ENCODE measurements at regions of chr1 and their contacts with region 1.

Region 1: DNA sequence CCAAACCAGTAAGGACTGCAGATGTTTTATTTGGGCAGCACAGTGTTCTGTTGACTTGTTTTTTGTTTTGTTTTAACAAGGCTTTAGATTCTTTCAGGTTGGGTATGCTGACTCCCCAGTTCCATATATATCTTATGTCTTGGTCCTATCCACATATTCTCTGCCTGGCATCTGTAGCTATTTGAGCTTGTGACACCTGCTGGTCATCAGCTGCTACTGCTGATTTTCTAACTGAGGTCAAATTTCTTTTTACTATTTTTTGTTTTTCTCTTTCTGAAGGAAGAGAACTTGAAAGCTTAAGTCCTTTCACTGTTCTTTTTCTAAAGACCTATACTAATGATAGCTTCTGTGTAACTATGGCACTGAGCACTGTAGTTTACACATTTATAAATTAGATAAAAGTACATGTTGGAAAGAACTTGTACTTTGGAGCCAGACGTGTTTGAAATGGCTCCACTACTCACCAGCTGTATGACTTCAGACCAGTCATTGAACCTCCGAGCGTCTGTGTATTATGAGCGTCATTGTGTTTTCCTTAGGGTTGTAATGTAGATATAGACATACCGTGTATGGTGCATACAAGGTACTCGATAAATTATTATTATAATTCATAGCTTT is 109.4 kb downstream of the NRDC start:
- DNase-seq: no peak
- H3K4me3 Mint-ChIP-seq: no peak overlapping the region
- H3K27ac Mint-ChIP-seq: no peak overlapping the region
- H3K4me1 Mint-ChIP-seq: peaks cover 6% of the 10 kb centered on the region
- H3K27me3 Mint-ChIP-seq: no peaks in the 10 kb centered on the region

Region 2: DNA sequence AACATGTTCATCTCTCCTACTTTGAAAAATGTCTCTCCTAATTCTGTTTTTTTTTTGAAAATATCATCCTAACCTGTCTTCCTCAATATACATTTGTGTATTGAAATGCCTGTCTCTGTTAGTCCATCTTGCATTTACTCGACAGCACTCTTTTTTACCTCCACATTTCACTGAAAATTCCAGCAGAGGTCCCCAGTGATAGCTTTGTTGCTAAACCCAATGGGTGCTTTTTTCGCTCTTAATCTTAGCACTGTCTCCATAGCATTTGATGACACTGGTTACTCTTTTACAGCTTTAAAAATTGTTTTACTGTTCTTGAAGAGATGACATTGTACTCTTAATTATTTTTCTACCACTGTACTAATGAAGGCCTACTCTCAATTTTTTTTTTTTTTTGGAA is 141.4 kb before region 1 on chr1:
- intact Hi-C with region 1: loop called (anchors 5 kb)
- DNase-seq: no peak
- H3K4me3 Mint-ChIP-seq: no peak overlapping the region
- H3K27ac Mint-ChIP-seq: no peak overlapping the region
- H3K4me1 Mint-ChIP-seq: peaks cover 7% of the 10 kb centered on the region
- H3K27me3 Mint-ChIP-seq: no peaks in the 10 kb centered on the region

Region 3: DNA sequence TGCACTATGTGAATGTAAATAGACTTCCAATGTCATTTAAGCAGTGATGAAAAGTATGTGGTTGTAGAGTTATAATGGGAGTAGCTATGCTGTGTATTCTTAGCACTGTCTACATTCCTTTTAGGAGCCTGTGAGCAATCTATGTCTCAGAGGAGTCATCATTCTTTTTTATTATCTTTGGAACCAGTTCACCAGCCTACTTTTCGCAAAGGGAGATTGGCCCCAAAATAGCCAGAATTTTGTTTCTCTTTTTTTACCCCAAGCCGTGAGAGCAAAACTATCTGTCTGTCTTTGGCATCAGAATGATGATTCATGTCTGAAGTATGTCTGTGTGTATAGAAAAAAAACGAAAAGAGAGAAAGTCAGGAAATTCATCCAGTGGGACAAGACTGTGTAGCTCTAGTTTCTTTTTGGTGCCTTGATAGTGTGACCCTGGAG is 108.0 kb before region 1 on chr1:
- intact Hi-C with region 1: no loop called
- DNase-seq: no peak
- H3K4me3 Mint-ChIP-seq: no peak overlapping the region
- H3K27ac Mint-ChIP-seq: no peak overlapping the region
- H3K4me1 Mint-ChIP-seq: no peaks in the 10 kb centered on the region
- H3K27me3 Mint-ChIP-seq: peaks cover 7% of the 10 kb centered on the region

Region 4: GRCh38 chr1:52268372-52268771 is 499.3 kb after region 1 on chr1:
- intact Hi-C with region 1: no loop called
- DNase-seq: no peak
- H3K4me3 Mint-ChIP-seq: no peak overlapping the region
- H3K27ac Mint-ChIP-seq: no peak overlapping the region
- H3K4me1 Mint-ChIP-seq: no peaks in the 10 kb centered on the region
- H3K27me3 Mint-ChIP-seq: no peaks in the 10 kb centered on the region

Measured in activated T-helper 2 cell treated with anti-CD3 and anti-CD28 coated beads, Interferon-gamma antibody, Interleukin-2, Interleukin-4, amounts not matched to agents 10 μg/mL and 5 μg/mL and 100 μg/mL, durations not matched to agents 14 hours and 24 hours and 36 hours (primary cell).